ENCODE measurements at regions of chr6 and their contacts with region 1.

Region 1: DNA sequence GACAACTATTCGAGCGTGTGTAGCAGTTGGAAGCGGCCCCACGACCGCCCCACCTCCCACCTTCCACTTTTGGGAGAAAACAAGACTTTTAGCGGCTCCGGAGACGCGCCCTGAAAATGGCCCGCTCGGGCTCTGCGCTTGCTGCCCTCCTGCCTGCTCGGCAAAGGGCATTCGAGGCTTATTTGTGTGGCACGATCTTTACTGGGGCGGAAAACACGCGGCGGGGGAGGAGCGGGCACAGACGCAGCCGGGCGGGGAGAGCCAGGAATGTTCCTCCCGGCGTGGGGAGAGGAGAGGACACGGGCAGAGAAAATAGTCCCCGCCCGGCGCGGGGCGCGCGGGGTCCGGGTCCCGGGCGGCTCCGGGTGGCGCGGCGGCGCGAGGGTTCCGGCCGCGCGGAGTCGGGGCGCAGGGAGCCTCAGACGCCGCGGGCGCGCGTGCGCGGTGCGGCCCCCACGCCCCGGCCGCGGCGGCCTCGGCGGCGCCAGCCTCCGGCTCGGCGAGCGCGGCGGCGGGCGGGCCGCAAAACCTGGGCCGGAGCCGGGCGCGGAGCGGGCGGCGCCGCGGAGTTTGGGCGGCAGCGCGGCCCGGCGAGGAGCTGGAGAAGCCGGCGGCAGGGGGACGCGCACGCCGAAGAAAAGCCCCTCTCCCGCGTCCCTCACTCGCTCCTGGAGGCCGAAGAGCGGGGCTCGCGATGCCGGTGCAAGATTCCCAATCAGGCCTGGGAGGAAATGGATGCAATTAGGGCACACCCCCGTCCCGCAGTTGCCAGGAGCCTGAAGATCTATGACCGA is 90.0 kb upstream of the ARID1B start:
- DNase-seq: peak; percentile 96 to 97
- H3K4me3 ChIP-seq: peak overlapping the region; percentile 41 to 73 (median 50)
- H3K27ac ChIP-seq: peak overlapping the region; percentile 97 to 99 (median 99)
- H3K4me1 ChIP-seq: peaks cover 5 to 10% of the 10 kb centered on the region in 2 donors
- H3K27me3 ChIP-seq: no peaks in the 10 kb centered on the region
- CTCF ChIP-seq: peak in 1 of 6 experiments; percentile 2
- POLR2A ChIP-seq: peak; percentile 60 to 78

Region 2: DNA sequence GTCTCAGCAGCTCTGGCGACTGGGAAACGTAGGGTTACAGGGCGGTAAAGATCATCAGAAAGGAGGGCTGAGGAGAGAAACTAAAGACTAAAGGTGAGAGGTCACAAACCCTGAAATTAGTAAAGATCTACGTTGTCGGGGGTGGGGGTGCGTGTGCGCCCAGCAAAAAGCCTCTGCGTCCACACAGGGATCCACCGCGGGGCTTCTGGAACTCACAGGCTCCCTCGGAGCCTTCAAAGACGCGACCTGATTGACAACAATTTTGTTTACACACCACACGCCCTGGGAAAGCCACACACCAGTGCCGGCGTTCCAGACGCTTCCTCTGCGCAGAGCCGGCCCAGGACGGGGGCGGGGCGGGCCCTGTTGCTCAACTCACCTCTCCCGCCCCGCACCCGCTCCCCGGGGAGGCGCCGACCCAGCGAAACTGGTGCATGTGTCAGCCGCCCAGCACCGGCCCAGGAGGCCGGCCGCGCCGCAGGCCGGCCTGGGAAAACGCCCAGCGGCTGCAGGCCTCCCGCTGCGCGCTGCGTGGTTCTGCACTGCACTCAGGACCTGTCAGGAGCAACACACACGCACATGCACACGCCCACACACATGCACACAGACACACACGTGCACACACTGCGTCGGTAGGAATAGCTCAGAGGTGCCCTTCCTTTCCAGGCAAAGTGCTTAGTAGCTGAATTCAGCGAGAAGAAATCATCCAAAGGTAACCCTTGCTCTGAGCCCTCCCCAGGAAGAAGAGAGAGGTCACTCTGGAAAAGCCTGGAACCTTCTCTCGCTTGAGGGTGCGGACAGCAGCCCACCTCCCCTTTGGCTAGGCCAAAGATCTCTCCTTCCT is 32.8 kb after region 1 on chr6:
- intact Hi-C with region 1: loop called (anchors 5 kb)
- DNase-seq: peak; percentile 99
- H3K4me3 ChIP-seq: peak overlapping the region in 1 of 3 donors; percentile 3
- H3K27ac ChIP-seq: peak overlapping the region; percentile 87 to 99 (median 96)
- H3K4me1 ChIP-seq: peaks cover 25 to 36% of the 10 kb centered on the region in 2 donors
- H3K27me3 ChIP-seq: no peaks in the 10 kb centered on the region
- CTCF ChIP-seq: no peak
- POLR2A ChIP-seq: peak; percentile 20 to 62

Measured in thyroid gland (tissue), 4 donors.